Activated CD4-positive, alpha-beta T cell treated with anti-CD3 and anti-CD28 coated beads for 36 hours (primary cell): ENCODE measurements at regions of chr4 and their contacts with region 1.

Region 1: DNA sequence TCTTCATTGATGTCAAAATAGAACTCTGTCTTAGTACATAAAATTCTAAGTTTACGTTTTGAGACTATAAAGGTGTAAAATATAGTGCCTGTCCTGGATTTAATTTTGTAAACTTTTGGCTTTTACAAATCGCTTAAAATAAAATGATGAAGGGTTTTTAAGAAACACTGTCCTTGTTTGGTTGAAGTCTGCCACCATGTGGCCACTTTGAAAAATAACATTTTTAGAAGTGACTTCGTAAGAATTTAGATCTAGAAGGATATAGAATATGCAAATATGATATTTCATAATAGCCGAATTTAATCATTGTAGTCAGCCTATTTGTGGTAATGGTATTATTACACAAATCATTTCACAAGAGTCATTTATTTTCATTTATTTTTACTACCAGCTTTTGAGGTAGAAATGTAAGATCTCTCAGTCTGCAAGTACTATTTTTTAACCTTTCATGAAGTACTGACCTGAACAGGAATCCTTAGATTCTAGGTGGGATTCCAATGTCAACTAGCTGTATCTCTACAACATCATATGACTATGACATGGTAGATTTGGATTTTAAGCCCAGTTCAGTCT is 31.0 kb upstream of the FAT4 start:
- DNase-seq: peak; percentile 16
- ATAC-seq: no peak
- H3K4me3 Mint-ChIP-seq: no peak overlapping the region
- H3K27ac Mint-ChIP-seq: no peak overlapping the region
- H3K4me1 Mint-ChIP-seq: no peaks in the 10 kb centered on the region
- H3K27me3 Mint-ChIP-seq: no peaks in the 10 kb centered on the region

Region 2: GRCh38 chr4:123776254-123776653 is 1507.5 kb before region 1 on chr4:
- CTCF ChIA-PET with region 1: no interaction called
- POLR2A ChIA-PET with region 1: no interaction called
- intact Hi-C with region 1: loop called in 1 of 2 experiments (anchors 10 kb)
- DNase-seq: no peak
- ATAC-seq: peak; percentile 64
- H3K4me3 Mint-ChIP-seq: no peak overlapping the region
- H3K27ac Mint-ChIP-seq: no peak overlapping the region
- H3K4me1 Mint-ChIP-seq: peaks cover 7% of the 10 kb centered on the region
- H3K27me3 Mint-ChIP-seq: no peaks in the 10 kb centered on the region

Region 3: DNA sequence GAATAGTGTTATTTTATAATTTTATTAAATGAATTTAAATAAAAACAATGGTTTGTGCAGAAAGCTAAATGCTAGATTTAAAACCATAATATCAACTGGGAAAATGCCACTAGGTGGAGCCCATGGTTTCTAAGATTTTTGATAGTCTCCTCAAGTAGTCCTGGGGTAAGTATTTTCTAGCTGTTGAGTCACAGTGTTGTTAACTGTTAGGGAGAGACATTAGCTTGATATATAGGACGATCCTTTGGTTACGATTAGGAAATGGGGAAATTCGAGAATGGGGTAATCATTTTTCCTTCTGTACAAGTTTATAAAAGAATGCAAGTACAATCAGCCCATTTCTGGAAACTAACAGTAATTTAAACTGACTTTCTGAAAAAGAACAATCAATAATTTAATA is 949.7 kb before region 1 on chr4:
- CTCF ChIA-PET with region 1: interaction called, 19 read pairs
- POLR2A ChIA-PET with region 1: no interaction called
- intact Hi-C with region 1: loop called (anchors 1 to 2 kb)
- DNase-seq: peak; percentile 8
- ATAC-seq: no peak
- H3K4me3 Mint-ChIP-seq: no peak overlapping the region
- H3K27ac Mint-ChIP-seq: no peak overlapping the region
- H3K4me1 Mint-ChIP-seq: no peaks in the 10 kb centered on the region
- H3K27me3 Mint-ChIP-seq: no peaks in the 10 kb centered on the region